Astrocyte of the cerebellum (primary cell): ENCODE measurements at regions of chr1 and their contacts with region 1.

Region 1: DNA sequence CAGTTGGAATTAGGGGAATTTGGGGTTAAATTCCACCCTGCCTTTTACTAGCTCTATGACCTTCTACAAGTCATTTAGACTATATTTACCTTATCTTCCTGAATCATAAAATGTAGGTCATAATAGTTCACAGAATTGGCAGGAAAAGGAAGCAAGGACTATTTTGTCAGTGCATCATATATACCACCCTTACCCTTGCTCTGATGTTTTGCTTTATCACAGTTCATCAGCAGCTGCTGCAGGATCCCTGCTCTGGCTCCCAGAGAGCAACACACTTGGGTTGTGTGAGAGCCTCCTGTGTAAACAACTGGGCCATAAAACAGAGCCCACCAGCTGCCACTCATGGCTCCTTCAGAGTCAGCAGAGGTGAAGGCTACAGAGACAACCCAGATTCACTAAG is 631.6 kb upstream of the CAMK1G start:
- DNase-seq: no peak
- H3K4me3 ChIP-seq: no peak overlapping the region
- CTCF ChIP-seq: no peak

Region 2: DNA sequence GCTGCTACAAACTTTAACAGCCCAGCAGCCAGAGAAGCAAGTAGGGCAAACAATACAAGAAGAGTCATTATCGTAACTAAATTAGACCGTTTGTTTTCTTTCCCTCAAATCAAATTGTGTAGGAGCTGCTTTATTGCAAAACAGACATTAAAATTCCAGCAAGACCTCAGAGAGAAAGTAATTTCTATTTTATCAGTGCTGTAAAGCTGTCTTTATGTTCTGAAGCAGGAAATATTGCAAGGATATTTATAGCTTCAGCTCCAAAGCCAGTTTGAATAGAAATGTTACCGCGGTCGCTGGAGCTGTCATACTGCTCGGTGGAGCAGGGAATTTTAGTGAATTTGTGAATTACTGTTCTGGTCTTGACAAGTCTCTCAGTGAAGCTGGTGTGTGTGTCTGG is 203.9 kb before region 1 on chr1:
- in situ Hi-C with region 1: loop called (anchors 10 kb)
- DNase-seq: no peak
- H3K4me3 ChIP-seq: no peak overlapping the region
- CTCF ChIP-seq: no peak

Region 3: GRCh38 chr1:208855403-208855802 is 96.5 kb before region 1 on chr1:
- in situ Hi-C with region 1: no loop called
- DNase-seq: no peak
- H3K4me3 ChIP-seq: no peak overlapping the region
- CTCF ChIP-seq: no peak

Region 4: GRCh38 chr1:208903251-208903905 is 48.5 kb before region 1 on chr1:
- in situ Hi-C with region 1: loop called (anchors 5 kb)
- DNase-seq: no peak
- H3K4me3 ChIP-seq: no peak overlapping the region
- CTCF ChIP-seq: no peak